ENCODE measurements at regions of chr21 and their contacts with region 1.

Region 1: DNA sequence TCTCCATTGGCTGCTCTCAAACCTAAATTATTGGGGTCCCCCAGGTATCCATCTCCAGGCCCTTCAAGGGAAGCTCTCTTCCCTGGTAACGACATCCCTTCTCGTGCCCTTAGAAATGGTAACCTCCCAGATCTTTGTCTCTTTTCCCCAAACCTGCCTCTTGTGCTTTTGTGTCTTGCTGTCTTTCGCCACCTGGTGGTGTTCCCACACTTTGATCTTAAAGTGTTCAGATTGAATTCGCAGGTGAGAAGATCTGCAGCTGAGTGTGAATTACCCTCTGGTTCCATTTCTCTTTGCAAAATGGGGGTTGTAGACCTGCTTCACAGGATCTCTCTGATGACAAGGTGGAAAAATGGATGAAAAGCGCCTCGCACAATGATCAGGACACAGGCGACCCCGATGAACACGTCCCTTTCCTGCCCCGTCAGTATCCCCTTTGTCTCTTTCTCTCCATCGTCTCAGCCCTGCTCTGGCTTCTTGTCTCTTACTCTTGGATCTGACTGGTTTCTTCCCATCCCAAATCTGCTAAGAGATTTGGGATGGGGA is 53.1 kb downstream of the DOP1B start:
- DNase-seq: peak; percentile 26 to 48 (median 39)
- H3K4me3 ChIP-seq: no peak overlapping the region
- H3K4me3 Mint-ChIP-seq: no peak overlapping the region
- H3K27ac ChIP-seq: no peak overlapping the region
- H3K27ac Mint-ChIP-seq: peak overlapping the region in 2 of 7 donors; percentile 55 to 57
- H3K4me1 ChIP-seq: no peaks in the 10 kb centered on the region
- H3K4me1 Mint-ChIP-seq: no peaks in the 10 kb centered on the region
- H3K27me3 ChIP-seq: no peaks in the 10 kb centered on the region
- H3K27me3 Mint-ChIP-seq: no peaks in the 10 kb centered on the region
- CTCF ChIP-seq: peak; percentile 65

Region 2: DNA sequence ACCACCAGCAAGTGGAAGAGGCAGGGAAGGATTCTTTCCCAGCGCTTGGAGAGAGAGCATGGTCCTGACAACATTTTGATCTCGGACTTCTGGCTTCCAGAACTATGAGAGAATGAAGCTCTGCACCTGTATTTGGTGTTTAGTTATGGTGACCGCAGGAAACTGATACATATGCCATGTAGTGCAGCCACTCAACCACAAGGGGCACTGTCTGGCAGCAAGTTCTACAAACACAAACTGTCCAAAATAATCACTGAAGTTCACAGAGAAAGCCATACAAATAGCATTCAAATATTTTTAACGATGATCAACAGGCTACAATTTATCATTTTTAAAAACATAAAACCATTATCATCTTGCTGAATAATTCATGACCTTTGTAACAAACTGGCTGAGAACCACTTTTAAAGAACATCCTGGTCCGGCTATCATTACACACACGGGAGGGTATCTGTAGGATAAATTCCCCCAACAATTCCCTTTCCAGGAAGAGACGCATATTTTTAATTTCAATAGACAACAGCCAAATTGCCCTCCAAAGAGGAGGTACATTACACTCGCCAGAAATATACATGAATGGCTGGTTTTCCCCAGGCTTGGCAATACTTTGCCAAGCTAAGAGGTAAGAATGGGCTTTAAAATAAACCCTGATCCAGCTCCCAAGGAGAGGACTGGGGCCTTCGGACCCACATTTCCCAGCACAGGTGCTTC is 84.0 kb before region 1 on chr21:
- intact Hi-C with region 1: loop called in 1 of 2 experiments (anchors 5 kb)
- DNase-seq: peak; percentile 30 to 51 (median 46)
- H3K4me3 ChIP-seq: no peak overlapping the region
- H3K4me3 Mint-ChIP-seq: no peak overlapping the region
- H3K27ac ChIP-seq: no peak overlapping the region
- H3K27ac Mint-ChIP-seq: peak overlapping the region in 1 of 7 donors; percentile 11
- H3K4me1 ChIP-seq: peaks cover 8 to 10% of the 10 kb centered on the region in 2 donors
- H3K4me1 Mint-ChIP-seq: peaks cover 12% of the 10 kb centered on the region
- H3K27me3 ChIP-seq: no peaks in the 10 kb centered on the region
- H3K27me3 Mint-ChIP-seq: peaks cover 4 to 9% (median 8%) of the 10 kb centered on the region in 3 donors
- CTCF ChIP-seq: peak; percentile 84

Region 3: GRCh38 chr21:36141513-36141925 is 68.2 kb before region 1 on chr21:
- intact Hi-C with region 1: loop called (anchors 2 to 5 kb)
- DNase-seq: peak; percentile 65 to 91 (median 80)
- H3K4me3 ChIP-seq: no peak overlapping the region
- H3K4me3 Mint-ChIP-seq: no peak overlapping the region
- H3K27ac ChIP-seq: no peak overlapping the region
- H3K27ac Mint-ChIP-seq: peak overlapping the region in 3 of 7 donors; percentile 25 to 57 (median 25)
- H3K4me1 ChIP-seq: peaks cover 1 to 3% of the 10 kb centered on the region in 2 donors
- H3K4me1 Mint-ChIP-seq: peaks cover 9% of the 10 kb centered on the region
- H3K27me3 ChIP-seq: no peaks in the 10 kb centered on the region
- H3K27me3 Mint-ChIP-seq: no peaks in the 10 kb centered on the region
- CTCF ChIP-seq: peak; percentile 95

Measured in CD14-positive monocyte (primary cell).